ENCODE measurements at regions of chr5 and their contacts with region 1.

Region 1: GRCh38 chr5:75681125-75681830 is 36.0 kb downstream of the POC5 start:
- DNase-seq: peak; percentile 27
- CTCF ChIP-seq: peak; percentile 57

Region 2: DNA sequence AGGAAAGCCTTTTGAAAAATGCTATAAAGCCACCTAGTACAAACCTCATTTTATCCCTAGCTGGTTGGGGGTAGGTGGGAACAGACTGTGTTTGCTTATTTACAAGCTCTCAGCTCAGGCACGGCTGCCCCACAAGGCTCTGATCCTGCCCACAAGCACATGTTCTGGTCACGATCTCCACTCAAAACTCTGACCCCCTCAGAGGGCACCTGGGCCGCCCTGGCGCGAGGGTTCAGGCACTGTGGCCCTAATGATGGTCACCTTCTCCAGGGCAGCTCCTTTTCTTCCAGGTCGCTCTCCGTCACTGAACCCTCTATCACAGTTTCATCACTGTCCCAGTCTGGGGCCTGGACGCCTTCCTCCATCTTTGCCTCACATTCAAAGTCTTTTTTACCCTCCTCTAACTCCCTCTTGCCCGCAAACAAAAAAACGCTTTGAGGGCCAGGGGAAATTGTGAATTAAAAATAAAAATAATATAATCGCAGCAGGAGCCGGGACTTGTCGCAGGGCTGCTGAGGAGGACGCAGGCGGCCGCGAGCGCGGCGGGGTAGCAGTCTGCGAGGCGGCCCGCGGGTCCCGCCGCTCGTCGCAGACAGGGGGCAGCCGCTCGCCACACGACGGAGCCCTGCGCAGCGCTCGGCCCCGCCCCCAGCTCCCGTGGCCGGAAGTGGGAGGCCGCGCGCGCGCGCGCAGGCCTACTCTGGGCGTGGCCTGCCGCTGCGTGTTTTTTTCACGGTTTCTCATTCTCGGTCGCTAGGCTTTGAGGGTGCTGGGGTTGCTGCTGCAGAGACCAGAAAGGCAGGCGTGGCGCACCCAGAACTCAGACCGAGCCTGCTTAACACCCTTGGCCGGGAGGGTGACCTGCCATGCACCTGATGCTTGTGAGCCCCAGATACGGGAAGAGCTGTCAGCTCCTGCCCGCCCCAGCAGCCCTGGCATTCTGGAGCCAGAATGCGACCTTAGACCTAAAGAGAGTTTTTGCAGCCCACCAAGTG is 444.7 kb before region 1 on chr5 and contains the start of gene ANKRD31:
- in situ Hi-C with region 1: loop called (anchors 25 kb)
- DNase-seq: peak; percentile 95
- CTCF ChIP-seq: peak; percentile 94

Region 3: GRCh38 chr5:75336625-75337339 is 344.5 kb before region 1 on chr5 and contains the start of gene HMGCR:
- in situ Hi-C with region 1: loop called (anchors 25 kb)
- DNase-seq: peak; percentile 93
- CTCF ChIP-seq: peak; percentile 35

Region 4: DNA sequence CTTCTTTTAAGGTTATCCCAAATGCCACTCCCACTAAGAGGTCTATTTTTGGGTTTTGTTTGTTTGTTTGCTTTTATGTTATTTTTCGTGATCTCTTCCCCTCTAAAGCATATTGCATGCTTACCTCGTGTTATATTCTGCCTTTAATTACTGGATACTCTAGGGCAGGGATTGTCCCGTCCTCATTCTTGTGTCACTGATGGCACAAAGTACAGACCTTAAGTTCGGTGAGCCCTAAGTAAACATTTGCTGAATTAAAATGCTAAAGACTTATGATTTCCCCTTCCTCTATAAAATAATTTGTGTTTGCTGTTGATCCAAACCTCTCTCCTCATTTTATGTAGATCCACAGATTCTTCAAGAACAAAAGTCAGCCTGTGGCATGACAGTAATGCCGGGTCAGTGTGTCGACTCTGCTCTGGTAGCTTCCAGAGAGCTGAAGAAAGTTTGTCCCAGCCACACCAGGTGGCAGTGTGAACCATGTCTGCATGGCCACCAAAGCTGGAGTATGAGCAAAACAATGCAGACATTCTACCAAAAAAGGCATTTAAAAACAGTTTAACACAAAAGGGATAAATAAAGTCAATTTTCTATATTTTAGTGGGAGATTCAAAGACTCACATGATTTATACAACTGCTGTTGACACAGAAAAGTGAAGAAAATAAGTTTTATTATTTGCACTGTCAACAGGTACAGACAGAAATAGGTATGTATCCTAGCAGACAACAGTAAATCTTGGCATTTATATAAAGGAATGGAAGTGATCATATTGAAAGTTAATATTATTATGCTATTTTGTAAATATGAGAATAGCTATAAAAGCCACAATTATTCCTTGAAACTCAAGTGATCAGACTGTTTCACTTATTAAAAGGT is 53.9 kb after region 1 on chr5:
- in situ Hi-C with region 1: no loop called
- DNase-seq: peak; percentile 29
- CTCF ChIP-seq: peak; percentile 77

Region 5: GRCh38 chr5:76473661-76474060 is 792.4 kb after region 1 on chr5:
- in situ Hi-C with region 1: no loop called
- DNase-seq: peak; percentile 15
- CTCF ChIP-seq: no peak